Activated CD4-positive, alpha-beta T cell treated with anti-CD3 and anti-CD28 coated beads for 36 hours (primary cell): ENCODE measurements at regions of chr6 and their contacts with region 1.

Region 1: DNA sequence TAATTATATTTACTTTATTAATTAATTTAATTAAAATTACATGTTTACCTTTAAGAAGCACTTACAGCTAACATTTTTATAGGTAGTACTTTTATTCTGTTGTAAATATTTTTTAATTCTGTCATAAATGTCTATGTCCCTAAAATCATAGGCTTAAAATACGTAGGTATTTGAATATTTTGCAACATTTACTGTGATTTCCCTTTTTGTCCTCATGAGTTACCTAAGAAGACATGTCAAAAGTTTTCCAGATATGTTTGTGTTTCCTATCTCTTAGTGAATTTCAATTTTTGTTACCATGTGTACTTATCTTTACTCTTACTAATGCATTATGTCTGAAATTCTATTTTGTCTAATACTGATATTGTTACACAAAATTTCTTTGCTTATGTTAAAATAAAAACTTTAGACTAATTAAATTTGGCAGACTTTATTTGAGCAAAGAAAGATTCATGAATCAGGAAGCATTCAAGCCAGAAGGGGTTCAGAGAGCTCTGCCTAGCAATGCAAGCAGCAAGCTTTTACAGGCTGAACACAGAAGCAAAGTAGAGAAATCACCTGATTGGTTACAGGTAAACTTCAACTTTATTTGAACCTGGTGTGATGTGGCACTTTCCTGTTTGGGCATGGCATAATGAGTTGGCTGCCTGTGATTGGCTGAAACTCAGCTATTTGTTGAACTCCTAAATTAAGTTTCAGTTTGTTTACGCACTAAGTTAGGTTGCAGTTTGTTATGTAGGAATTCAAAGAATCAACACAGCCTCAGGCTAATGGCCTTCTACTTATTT is 123.2 kb upstream of the TMEM170B start:
- DNase-seq: peak; percentile 60
- ATAC-seq: peak; percentile 45
- H3K4me3 Mint-ChIP-seq: no peak overlapping the region
- H3K27ac Mint-ChIP-seq: peak overlapping the region; percentile 42
- H3K4me1 Mint-ChIP-seq: peaks cover 50% of the 10 kb centered on the region
- H3K27me3 Mint-ChIP-seq: no peaks in the 10 kb centered on the region

Region 2: GRCh38 chr6:11172501-11173332 is 241.7 kb before region 1 on chr6:
- CTCF ChIA-PET with region 1: interaction called, 3 read pairs
- POLR2A ChIA-PET with region 1: no interaction called
- intact Hi-C with region 1: loop called in 1 of 2 experiments (anchors 5 kb)
- DNase-seq: peak; percentile 87
- ATAC-seq: peak; percentile 76
- H3K4me3 Mint-ChIP-seq: no peak overlapping the region
- H3K27ac Mint-ChIP-seq: no peak overlapping the region
- H3K4me1 Mint-ChIP-seq: peaks cover 13% of the 10 kb centered on the region
- H3K27me3 Mint-ChIP-seq: no peaks in the 10 kb centered on the region

Region 3: DNA sequence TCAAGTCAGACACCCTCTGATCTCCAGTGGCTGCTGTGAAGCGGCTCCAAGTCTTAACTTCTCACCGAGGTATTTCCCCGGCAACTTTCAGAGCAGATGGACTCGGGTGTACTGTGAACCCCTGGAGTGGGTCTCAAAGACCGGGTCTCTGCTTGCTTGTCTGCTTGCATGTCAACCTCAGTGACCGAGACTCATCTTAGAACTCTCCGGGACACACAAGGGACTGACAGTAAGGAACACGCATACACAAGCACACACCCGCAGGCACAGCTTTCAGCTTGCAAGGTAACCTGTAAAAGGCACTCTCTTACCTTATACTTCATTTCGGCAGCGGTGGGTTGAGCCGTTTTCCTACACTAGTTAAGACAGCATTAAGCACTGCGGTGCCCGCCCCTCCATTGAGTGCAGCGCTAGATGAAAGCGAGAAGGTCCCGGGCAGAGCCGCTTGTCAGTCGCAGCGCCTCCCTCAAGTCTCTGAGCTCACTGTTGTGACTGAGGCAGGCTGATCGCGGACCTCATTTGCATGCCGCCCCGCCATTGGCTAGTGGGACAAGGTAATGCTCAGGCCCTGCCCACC is 182.1 kb before region 1 on chr6 and contains the start of gene NEDD9:
- CTCF ChIA-PET with region 1: interaction called, 3 read pairs
- POLR2A ChIA-PET with region 1: no interaction called
- intact Hi-C with region 1: loop called in 1 of 2 experiments (anchors 2 kb)
- DNase-seq: peak; percentile 97
- ATAC-seq: peak; percentile 96
- H3K4me3 Mint-ChIP-seq: peak within 1 kb of the TSS; percentile 81
- H3K27ac Mint-ChIP-seq: peak within 1 kb of the TSS; percentile 95
- H3K4me1 Mint-ChIP-seq: peaks cover 65% of the 10 kb centered on the region
- H3K27me3 Mint-ChIP-seq: no peaks in the 10 kb centered on the region
- total RNA-seq, gene NEDD9: 23.6 to 27.3 TPM

Region 4: DNA sequence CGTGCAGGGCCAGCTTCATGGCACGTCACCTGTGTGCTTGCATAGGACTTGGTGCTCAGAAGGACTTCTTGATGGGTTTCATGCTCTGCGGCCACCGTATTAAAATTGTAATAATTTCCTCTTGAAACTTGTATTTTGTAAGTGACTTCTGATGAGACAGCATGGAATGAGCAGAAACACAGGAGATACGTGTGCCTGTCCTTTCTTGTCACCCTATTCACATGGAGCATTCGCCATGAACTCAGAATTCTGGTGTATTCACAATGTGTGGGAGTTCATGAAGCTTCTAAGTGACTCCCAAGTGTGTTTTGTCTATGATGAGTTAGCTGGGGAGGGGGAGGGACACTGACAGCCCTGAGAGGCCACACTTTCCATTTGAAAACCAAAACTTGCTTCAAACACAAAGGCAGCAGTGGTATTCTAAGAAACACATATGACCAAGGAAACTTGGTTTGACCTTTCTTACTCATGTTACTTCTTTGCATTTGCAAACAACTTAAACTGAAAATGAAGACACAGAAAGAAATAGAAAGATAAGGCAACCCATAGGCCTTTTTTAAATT is 89.8 kb before region 1 on chr6:
- CTCF ChIA-PET with region 1: interaction called, 4 read pairs
- POLR2A ChIA-PET with region 1: no interaction called
- intact Hi-C with region 1: loop called (anchors 2 to 5 kb)
- DNase-seq: peak; percentile 77
- ATAC-seq: peak; percentile 93
- H3K4me3 Mint-ChIP-seq: peak overlapping the region; percentile 42
- H3K27ac Mint-ChIP-seq: peak overlapping the region; percentile 86
- H3K4me1 Mint-ChIP-seq: peaks cover 68% of the 10 kb centered on the region
- H3K27me3 Mint-ChIP-seq: no peaks in the 10 kb centered on the region

Region 5: GRCh38 chr6:11381801-11382513 is 32.4 kb before region 1 on chr6:
- CTCF ChIA-PET with region 1: interaction called, 6 read pairs
- POLR2A ChIA-PET with region 1: interaction called, 3 read pairs
- intact Hi-C with region 1: loop called (anchors 2 kb)
- DNase-seq: peak; percentile 80
- ATAC-seq: peak; percentile 93
- H3K4me3 Mint-ChIP-seq: peak overlapping the region; percentile 78
- H3K27ac Mint-ChIP-seq: peak overlapping the region; percentile 88
- H3K4me1 Mint-ChIP-seq: peaks cover 56% of the 10 kb centered on the region
- H3K27me3 Mint-ChIP-seq: peaks cover 2% of the 10 kb centered on the region